ENCODE measurements at regions of chr20 and their contacts with region 1.

Region 1: DNA sequence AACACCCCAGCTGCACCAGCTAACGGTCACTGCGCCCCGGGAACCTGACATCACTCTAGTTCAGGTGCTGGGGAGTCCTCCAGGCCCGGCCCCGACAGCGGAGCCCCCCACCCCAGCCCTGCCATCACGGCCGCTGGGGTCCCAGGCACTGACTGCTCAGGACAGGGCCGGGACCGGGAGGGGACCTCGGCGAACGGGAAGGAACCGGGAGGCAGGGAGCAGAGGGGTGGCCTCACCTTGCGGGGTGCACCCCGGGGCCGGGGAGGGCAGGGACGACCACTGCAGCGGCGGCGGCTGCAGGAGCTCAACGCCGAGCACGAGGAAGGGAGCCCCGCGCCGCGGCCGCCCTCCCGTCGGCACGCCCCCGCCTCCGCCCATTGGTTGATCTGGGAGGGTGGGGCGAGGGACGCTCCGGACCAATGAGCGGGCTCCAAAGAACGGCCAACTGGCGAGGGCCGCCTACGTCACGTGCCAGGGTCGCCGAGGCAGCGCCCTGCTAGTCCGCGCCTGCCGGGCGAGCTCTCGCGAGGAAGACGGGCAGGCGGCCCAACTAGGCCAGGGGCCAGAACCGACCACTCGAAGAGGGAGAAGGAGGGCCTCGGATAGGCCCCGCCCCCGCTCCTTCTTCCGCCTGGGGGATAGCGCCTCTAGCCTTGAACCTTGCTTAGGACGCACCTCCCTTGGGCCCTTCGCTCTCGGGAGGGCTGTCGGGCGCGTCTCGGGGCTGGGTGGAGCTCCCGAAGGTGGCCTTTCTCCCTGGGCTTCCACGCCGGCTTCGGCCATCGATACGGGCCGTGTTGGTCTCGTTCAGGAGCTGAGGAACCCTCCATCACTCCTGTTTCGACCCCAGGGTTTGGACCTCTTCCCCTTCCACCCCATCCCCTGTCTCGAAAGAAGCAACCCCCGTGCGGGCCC is at the start of gene ADISSP:
- DNase-seq: peak; percentile 99
- ATAC-seq: peak; percentile 94
- H3K4me3 Mint-ChIP-seq: peak within 1 kb of the TSS; percentile 84
- H3K27ac Mint-ChIP-seq: peak within 1 kb of the TSS; percentile 88
- H3K4me1 Mint-ChIP-seq: peaks cover 23% of the 10 kb centered on the region
- H3K27me3 Mint-ChIP-seq: peaks cover 9% of the 10 kb centered on the region
- total RNA-seq, gene ADISSP: 32.5 to 37.0 TPM

Region 2: DNA sequence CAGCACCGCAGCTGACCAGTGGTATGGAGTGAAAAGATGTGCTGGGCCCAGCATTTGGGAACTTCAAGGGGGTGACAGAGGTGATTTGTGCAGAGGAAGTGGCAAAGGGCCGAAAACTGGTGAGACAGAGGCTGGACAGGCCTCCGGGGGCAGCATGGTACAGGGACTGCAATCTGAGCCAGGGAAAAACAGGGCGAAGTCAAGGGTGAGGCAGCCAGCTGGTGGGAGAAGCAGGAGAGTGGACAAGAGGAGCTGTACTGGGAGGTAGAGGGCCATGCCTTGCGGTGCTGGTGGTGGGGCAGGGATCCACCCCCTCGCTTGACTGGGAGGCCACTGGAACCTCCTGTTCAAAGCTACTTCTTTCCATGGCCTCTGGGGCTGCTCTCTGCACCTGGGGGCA is 97.2 kb before region 1 on chr20:
- CTCF ChIA-PET with region 1: interaction called, 22 read pairs
- DNase-seq: no peak
- ATAC-seq: no peak
- H3K4me3 Mint-ChIP-seq: no peak overlapping the region
- H3K27ac Mint-ChIP-seq: no peak overlapping the region
- H3K4me1 Mint-ChIP-seq: peaks cover 25% of the 10 kb centered on the region
- H3K27me3 Mint-ChIP-seq: peaks cover 81% of the 10 kb centered on the region

Region 3: GRCh38 chr20:3753098-3753980 is 14.3 kb before region 1 on chr20:
- CTCF ChIA-PET with region 1: interaction called, 80 read pairs
- DNase-seq: peak; percentile 75
- ATAC-seq: peak; percentile 72
- H3K4me3 Mint-ChIP-seq: no peak overlapping the region
- H3K27ac Mint-ChIP-seq: no peak overlapping the region
- H3K4me1 Mint-ChIP-seq: peaks cover 7% of the 10 kb centered on the region
- H3K27me3 Mint-ChIP-seq: peaks cover 4% of the 10 kb centered on the region

Region 4: GRCh38 chr20:3786665-3787323 is 19.1 kb after region 1 on chr20 and contains the start of gene CENPB:
- CTCF ChIA-PET with region 1: interaction called, 37 read pairs
- DNase-seq: peak; percentile 91
- ATAC-seq: peak; percentile 95
- H3K4me3 Mint-ChIP-seq: peak within 1 kb of the TSS; percentile 83
- H3K27ac Mint-ChIP-seq: peak within 1 kb of the TSS; percentile 81
- H3K4me1 Mint-ChIP-seq: peaks cover 34% of the 10 kb centered on the region
- H3K27me3 Mint-ChIP-seq: no peaks in the 10 kb centered on the region
- total RNA-seq, gene CENPB: 76.5 to 76.8 TPM

Region 5: DNA sequence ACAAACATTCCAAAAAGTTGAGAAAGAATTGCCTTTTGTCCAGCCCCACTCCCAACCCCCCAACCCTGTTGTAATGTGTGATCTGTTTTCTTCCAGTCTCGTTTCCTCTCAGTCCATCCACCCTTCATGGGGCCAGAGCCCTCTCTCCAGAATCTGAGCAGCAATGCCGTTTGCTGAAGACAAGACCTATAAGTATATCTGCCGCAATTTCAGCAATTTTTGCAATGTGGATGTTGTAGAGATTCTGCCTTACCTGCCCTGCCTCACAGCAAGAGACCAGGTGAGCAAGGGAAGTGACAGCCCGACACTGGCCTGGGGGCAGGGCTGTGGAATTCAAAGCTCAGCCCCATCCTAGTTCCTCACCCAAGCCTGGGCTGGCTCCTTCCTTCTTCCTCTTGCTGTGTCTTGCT is 86.8 kb after region 1 on chr20:
- CTCF ChIA-PET with region 1: interaction called, 11 read pairs
- DNase-seq: no peak
- ATAC-seq: peak; percentile 38
- H3K4me3 Mint-ChIP-seq: no peak overlapping the region
- H3K27ac Mint-ChIP-seq: peak overlapping the region; percentile 12
- H3K4me1 Mint-ChIP-seq: peaks cover 8% of the 10 kb centered on the region
- H3K27me3 Mint-ChIP-seq: no peaks in the 10 kb centered on the region